Activated CD8-positive, alpha-beta T cell treated with anti-CD3 and anti-CD28 coated beads, Interleukin-2, amount 10 ng/mL, durations not matched to agents 7 days and 5 days (primary cell): ENCODE measurements at regions of chr1 and their contacts with region 1.

Region 1: DNA sequence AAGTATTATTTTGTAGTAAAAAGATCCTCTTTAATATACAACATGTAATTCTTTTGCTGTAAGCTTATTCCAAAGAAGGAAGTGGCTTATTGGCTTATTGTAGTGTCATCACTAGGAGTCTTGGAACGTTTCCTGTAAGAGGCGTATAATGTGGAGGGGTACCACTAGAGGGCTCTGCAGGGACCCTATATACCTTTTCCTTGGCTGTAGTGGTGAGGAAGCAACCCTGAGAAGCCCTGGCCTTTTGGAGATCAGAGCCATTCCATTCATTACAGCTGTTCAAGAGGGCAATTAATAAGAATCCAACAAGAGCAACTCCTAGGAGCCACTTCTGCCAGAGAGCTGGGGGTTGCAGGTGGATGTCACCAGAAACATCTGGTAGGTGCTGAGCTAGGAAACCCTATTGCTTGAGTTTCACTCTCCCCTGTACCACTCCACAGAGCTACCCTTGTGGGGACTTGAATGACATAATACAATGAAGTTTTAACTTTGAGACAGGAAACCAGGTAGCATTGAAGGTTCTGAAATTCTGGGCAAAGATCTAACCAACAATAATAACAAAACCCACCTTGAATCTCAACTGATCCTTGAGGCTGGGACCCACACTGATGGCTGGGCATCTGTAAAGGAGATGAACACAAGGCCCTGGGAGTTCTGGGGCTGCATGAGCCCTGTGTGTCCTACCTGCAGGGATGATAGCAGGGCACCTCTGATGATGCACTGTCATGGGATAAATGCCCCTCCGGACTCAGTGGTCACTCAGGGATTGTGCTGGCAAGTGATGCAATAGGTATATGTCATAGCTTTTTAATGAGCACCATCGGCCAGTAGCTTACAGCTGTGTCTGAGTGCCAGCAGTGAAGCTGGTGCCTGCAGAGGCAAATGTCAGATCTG is 160.2 kb upstream of the COA6 start:
- DNase-seq: peak; percentile 64
- ATAC-seq: peak; percentile 64
- H3K4me3 Mint-ChIP-seq: peak overlapping the region; percentile 82
- H3K27ac Mint-ChIP-seq: peak overlapping the region; percentile 82
- H3K4me1 Mint-ChIP-seq: peaks cover 48% of the 10 kb centered on the region
- H3K27me3 Mint-ChIP-seq: peaks cover 10% of the 10 kb centered on the region

Region 2: DNA sequence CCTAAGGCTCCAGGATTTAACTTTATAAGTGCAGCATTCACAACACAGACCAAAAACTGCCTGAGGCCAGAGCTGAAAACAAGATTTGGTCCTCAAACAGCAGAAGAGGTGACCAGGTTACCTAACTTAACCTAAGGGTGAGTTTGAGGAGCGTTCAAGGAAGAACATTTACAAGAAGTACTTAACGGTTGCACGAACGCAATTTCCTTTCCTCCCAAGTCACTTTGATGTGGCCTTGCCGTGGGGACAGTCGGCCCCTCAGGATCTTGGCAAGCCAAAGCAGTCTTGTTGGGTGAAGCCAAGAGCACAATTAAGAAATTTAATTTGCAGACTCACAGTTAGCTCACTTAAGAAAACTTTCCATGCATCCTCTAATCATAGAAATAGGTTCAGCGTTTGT is 42.4 kb before region 1 on chr1:
- CTCF ChIA-PET with region 1: interaction called, 38 read pairs
- POLR2A ChIA-PET with region 1: interaction called, 4 read pairs
- DNase-seq: peak; percentile 71
- ATAC-seq: peak; percentile 78
- H3K4me3 Mint-ChIP-seq: peak overlapping the region; percentile 50
- H3K27ac Mint-ChIP-seq: peak overlapping the region; percentile 87
- H3K4me1 Mint-ChIP-seq: peaks cover 73% of the 10 kb centered on the region
- H3K27me3 Mint-ChIP-seq: no peaks in the 10 kb centered on the region

Region 3: DNA sequence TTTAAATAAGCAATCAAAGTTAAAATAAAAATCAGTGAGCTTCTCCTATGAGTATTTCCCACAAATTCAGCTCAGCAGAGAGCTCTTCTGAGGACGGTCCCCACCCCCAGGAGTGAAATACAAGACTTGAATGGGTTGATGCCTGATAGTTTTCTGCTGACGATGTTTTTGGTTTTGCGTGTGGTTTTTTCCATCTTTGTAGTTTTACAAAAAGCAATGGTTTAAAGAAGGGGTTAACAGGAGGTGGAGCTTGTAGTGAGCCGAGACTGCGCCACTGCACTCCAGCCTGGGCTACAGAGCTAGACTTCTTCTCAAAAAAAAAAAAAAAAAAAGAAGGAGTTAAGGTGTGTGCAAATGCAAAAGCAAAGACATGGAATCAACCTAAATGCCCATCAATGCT is 11.4 kb before region 1 on chr1:
- CTCF ChIA-PET with region 1: interaction called, 14 read pairs
- POLR2A ChIA-PET with region 1: no interaction called
- DNase-seq: no peak
- ATAC-seq: no peak
- H3K4me3 Mint-ChIP-seq: no peak overlapping the region
- H3K27ac Mint-ChIP-seq: no peak overlapping the region
- H3K4me1 Mint-ChIP-seq: peaks cover 11% of the 10 kb centered on the region
- H3K27me3 Mint-ChIP-seq: peaks cover 64% of the 10 kb centered on the region

Region 4: DNA sequence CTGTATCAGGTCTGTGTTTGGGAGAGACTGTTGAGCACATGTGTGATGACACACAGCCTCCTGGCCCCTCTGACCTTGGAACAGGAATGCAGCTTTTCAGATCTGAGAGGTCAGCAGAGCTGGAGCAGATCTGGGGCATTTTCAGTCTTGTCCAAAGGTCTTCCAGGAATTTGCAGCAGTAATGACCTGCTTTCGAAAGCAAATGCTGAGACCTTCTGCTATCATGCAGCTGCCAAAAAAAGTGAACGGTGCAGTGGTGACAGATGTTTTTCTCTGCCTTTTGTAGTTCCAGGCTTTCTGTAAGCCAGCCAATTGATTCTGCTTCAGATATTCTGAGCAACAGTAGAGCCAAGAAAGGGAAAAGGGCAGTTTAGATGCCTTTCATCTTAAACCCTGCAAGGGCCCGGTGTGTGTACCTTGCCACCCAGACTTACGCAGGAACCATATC is 22.4 kb after region 1 on chr1:
- CTCF ChIA-PET with region 1: interaction called, 21 read pairs
- POLR2A ChIA-PET with region 1: no interaction called
- DNase-seq: no peak
- ATAC-seq: no peak
- H3K4me3 Mint-ChIP-seq: no peak overlapping the region
- H3K27ac Mint-ChIP-seq: peak overlapping the region; percentile 57
- H3K4me1 Mint-ChIP-seq: peaks cover 55% of the 10 kb centered on the region
- H3K27me3 Mint-ChIP-seq: no peaks in the 10 kb centered on the region

Region 5: DNA sequence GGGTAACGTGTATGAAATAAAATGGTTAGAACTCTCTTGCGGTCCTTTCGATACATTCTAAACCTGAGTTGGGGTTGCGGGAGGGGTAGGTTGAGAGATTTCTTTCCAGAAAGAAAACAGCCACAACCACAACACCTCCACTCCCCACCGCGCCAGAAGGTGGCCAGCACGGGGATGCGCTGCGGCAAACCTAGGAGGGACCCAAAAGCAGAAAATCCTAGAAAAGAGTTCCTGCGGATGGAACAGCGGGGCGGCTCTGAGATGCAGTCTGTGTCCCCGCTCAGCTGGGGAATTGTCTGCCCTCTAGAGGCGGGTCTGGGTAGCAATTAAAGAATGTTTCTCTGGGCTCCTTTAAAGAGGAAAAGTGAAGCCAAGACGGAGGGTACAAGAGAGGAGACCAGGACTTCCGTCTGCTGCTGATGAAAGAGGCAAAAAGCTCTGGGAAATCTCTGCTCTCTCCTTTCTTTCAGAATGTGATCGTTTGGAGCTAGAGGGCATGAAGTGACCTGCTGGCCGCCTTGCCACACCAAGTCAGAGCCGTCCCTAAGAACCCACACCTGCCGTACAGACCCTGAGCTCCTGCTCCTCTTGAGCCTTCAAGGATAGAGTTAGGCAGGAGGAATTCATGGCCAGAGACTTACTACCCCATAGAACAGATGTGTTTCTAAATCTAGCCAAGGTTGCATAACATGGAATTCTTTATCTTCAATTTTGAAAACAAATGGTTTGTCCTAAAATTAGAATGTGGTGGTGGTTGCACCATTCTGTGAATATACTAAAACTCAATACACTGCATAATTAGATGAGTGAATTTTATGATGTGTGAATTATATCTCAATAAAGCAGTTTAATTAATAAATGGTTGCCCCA is 113.7 kb after region 1 on chr1:
- CTCF ChIA-PET with region 1: interaction called, 44 read pairs
- POLR2A ChIA-PET with region 1: interaction called, 3 read pairs
- DNase-seq: peak; percentile 77
- ATAC-seq: peak; percentile 92
- H3K4me3 Mint-ChIP-seq: peak overlapping the region; percentile 64
- H3K27ac Mint-ChIP-seq: no peak overlapping the region
- H3K4me1 Mint-ChIP-seq: peaks cover 26% of the 10 kb centered on the region
- H3K27me3 Mint-ChIP-seq: peaks cover 5% of the 10 kb centered on the region

Region 6: GRCh38 chr1:234398849-234399381 is 185.9 kb after region 1 on chr1:
- CTCF ChIA-PET with region 1: no interaction called
- POLR2A ChIA-PET with region 1: no interaction called
- DNase-seq: no peak
- ATAC-seq: no peak
- H3K4me3 Mint-ChIP-seq: peak overlapping the region; percentile 41
- H3K27ac Mint-ChIP-seq: peak overlapping the region; percentile 71
- H3K4me1 Mint-ChIP-seq: peaks cover 42% of the 10 kb centered on the region
- H3K27me3 Mint-ChIP-seq: no peaks in the 10 kb centered on the region